Activated B cell treated with CpG ODN at 0.5 μM for 24 hours (primary cell): ENCODE measurements at regions of chr12 and their contacts with region 1.

Region 1: DNA sequence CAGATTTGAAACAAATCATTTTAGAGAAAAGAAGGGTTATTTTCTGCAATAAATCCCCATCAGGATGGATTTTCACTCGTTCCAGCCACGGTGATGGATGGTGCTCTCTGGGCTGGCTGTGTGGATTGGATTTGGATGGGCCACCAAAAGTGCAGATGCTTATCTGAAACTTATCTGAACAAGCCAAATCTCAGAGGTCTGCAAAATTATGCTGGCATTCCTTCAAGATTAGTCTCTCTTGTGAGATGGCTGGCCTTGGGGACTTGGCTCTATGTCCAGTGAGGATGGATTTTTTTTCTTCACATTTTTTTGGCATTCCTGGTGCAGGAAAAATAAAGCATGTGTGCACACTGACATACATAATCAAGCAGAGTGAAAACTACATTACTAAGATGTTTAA is 341.9 kb downstream of the GXYLT1 start:
- DNase-seq: no peak
- ATAC-seq: no peak
- H3K4me3 Mint-ChIP-seq: no peak overlapping the region
- H3K27ac Mint-ChIP-seq: no peak overlapping the region
- H3K4me1 Mint-ChIP-seq: no peaks in the 10 kb centered on the region
- H3K27me3 Mint-ChIP-seq: no peaks in the 10 kb centered on the region
- CTCF ChIP-seq: no peak

Region 2: GRCh38 chr12:40745386-40745785 is 1057.4 kb before region 1 on chr12:
- CTCF ChIA-PET with region 1: no interaction called
- POLR2A ChIA-PET with region 1: no interaction called
- intact Hi-C with region 1: loop called (anchors 10 kb)
- DNase-seq: no peak
- ATAC-seq: no peak
- H3K4me3 Mint-ChIP-seq: no peak overlapping the region
- H3K27ac Mint-ChIP-seq: no peak overlapping the region
- H3K4me1 Mint-ChIP-seq: no peaks in the 10 kb centered on the region
- H3K27me3 Mint-ChIP-seq: no peaks in the 10 kb centered on the region
- CTCF ChIP-seq: no peak

Region 3: GRCh38 chr12:40762072-40762471 is 1040.7 kb before region 1 on chr12:
- CTCF ChIA-PET with region 1: no interaction called
- POLR2A ChIA-PET with region 1: no interaction called
- intact Hi-C with region 1: no loop called
- DNase-seq: no peak
- ATAC-seq: no peak
- H3K4me3 Mint-ChIP-seq: no peak overlapping the region
- H3K27ac Mint-ChIP-seq: no peak overlapping the region
- H3K4me1 Mint-ChIP-seq: no peaks in the 10 kb centered on the region
- H3K27me3 Mint-ChIP-seq: no peaks in the 10 kb centered on the region
- CTCF ChIP-seq: no peak

Region 4: DNA sequence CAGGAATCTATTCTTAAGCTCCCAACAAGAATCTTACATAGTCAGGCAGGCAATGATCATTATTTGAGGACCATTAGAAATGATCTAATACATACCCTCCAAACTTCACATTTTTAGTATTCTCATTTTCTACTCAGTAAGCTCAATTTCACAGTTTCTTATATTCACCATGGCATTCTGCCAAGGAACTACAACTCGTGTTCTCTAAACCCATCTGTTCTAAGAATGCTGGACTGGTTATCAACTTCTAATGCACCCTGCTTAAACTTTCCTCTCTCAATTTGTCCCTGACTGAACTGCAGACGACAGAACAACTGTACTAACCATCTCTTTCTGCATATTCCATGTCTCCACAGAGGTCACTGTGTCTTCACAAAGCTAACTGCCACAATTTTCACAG is 283.2 kb after region 1 on chr12:
- CTCF ChIA-PET with region 1: no interaction called
- POLR2A ChIA-PET with region 1: no interaction called
- intact Hi-C with region 1: no loop called
- DNase-seq: no peak
- ATAC-seq: no peak
- H3K4me3 Mint-ChIP-seq: no peak overlapping the region
- H3K27ac Mint-ChIP-seq: no peak overlapping the region
- H3K4me1 Mint-ChIP-seq: peaks cover 7% of the 10 kb centered on the region
- H3K27me3 Mint-ChIP-seq: no peaks in the 10 kb centered on the region
- CTCF ChIP-seq: no peak